GM12878 (cell line): ENCODE measurements at regions of chr14 and their contacts with region 1.

Region 1: DNA sequence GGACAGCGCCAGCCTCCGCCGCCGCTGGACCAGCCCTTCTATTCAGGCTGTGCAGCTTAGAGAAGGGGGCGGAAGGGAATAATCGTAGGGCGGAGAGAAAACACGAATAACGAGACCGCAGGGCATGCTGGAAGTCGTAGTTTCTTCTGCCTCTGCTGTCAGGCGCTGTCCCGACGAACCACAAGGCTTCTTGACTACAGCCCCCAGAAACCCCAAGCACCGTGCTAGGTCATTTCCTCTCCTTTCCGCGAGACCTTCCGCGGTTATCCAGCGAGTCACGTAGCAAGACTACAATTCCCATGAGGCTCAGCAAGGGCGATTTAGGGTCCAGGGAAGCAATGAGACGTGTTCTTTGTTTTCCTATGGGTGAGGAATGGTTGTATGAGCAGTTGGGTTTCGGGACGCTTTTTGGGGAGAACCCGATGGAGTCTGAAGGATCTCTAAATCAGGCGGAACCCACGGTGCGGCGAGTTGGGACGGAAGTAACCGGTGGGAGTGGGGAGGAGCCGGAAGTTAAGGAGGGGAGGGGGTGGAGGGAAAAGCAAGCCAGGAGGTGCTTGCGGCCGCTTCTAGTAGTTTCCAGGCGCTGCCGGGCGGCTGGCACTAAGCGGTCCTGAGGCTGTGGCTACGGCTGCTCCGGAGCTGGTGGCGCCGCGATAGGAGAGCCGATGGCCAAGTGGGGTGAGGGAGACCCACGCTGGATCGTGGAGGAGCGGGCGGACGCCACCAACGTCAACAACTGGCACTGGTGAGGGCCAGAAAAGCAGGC is at the starts of genes AHSA1 and VIPAS39:
- DNase-seq: peak; percentile 99
- ATAC-seq: peak; percentile 95
- H3K4me3 ChIP-seq: peak within 1 kb of the TSS; percentile 88
- H3K27ac ChIP-seq: peak within 1 kb of the TSS; percentile 97
- H3K4me1 ChIP-seq: peaks cover 13% of the 10 kb centered on the region
- H3K27me3 ChIP-seq: no peaks in the 10 kb centered on the region
- CTCF ChIP-seq: no peak
- EP300 ChIP-seq: no peak
- POLR2A ChIP-seq: peak; percentile 93
- RAD21 ChIP-seq: no peak
- polyA plus RNA-seq, gene AHSA1: 51.8 to 98.3 TPM
- polyA plus RNA-seq, gene VIPAS39: 6.7 to 10.5 TPM

Region 2: DNA sequence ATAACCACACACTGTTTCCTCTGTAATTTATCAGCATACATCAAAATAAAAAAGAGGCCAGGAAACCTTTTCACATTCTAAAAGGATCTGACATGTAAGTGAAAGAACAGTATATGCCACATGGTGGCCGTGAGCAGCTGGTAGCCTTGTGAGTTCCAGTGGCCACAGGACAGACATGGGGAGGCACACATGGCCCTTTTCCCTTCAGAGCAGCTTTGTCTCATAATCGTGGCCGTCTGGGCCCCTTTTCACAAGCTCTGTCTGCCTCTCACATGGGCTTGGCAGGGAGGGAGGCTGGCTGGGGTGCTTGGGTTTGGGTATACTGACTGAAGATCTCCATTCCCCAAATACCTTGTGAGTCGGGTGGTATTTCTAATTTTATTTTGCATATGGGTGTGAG is 314.6 kb before region 1 on chr14:
- CTCF ChIA-PET with region 1: no interaction called
- POLR2A ChIA-PET with region 1: no interaction called
- RAD21 ChIA-PET with region 1: no interaction called
- SMC1A ChIA-PET with region 1: no interaction called
- in situ Hi-C with region 1: no loop called
- intact Hi-C with region 1: no loop called
- DNase-seq: no peak
- ATAC-seq: no peak
- H3K4me3 ChIP-seq: no peak overlapping the region
- H3K27ac ChIP-seq: no peak overlapping the region
- H3K4me1 ChIP-seq: no peaks in the 10 kb centered on the region
- H3K27me3 ChIP-seq: peaks cover 15 to 18% of the 10 kb centered on the region in 2 experiments
- CTCF ChIP-seq: no peak
- EP300 ChIP-seq: no peak
- POLR2A ChIP-seq: no peak
- RAD21 ChIP-seq: no peak

Region 3: GRCh38 chr14:77320238-77320935 is 137.3 kb before region 1 on chr14 and contains the start of gene POMT2:
- CTCF ChIA-PET with region 1: interaction called, 18 read pairs
- POLR2A ChIA-PET with region 1: interaction called, 6 read pairs
- RAD21 ChIA-PET with region 1: interaction called, 10 read pairs
- SMC1A ChIA-PET with region 1: interaction called, 10 read pairs
- in situ Hi-C with region 1: no loop called
- intact Hi-C with region 1: loop called (anchors 2 kb)
- DNase-seq: peak; percentile 64
- ATAC-seq: peak; percentile 81
- H3K4me3 ChIP-seq: peak within 1 kb of the TSS; percentile 98
- H3K27ac ChIP-seq: peak within 1 kb of the TSS; percentile 98
- H3K4me1 ChIP-seq: peaks cover 4% of the 10 kb centered on the region; the same call in 1 of the 2 replicates
- H3K27me3 ChIP-seq: no peaks in the 10 kb centered on the region
- CTCF ChIP-seq: peak; percentile 14 to 27 (median 26); a peak in 4 of 6 replicates
- EP300 ChIP-seq: no peak
- POLR2A ChIP-seq: no peak
- RAD21 ChIP-seq: no peak
- polyA plus RNA-seq, gene POMT2: 0.23 to 0.99 TPM

Region 4: GRCh38 chr14:77478796-77479195 is 21.1 kb after region 1 on chr14:
- CTCF ChIA-PET with region 1: interaction called, 40 read pairs
- POLR2A ChIA-PET with region 1: no interaction called
- RAD21 ChIA-PET with region 1: interaction called, 12 read pairs
- SMC1A ChIA-PET with region 1: interaction called, 4 read pairs
- in situ Hi-C with region 1: no loop called
- intact Hi-C with region 1: no loop called
- DNase-seq: peak; percentile 30
- ATAC-seq: peak; percentile 99
- H3K4me3 ChIP-seq: no peak overlapping the region
- H3K27ac ChIP-seq: no peak overlapping the region
- H3K4me1 ChIP-seq: peaks cover 8% of the 10 kb centered on the region
- H3K27me3 ChIP-seq: no peaks in the 10 kb centered on the region; a peak in 1 of 4 replicates
- CTCF ChIP-seq: no peak
- EP300 ChIP-seq: peak in 1 of 2 experiments; percentile 54; a peak in 1 of 4 replicates
- POLR2A ChIP-seq: no peak
- RAD21 ChIP-seq: no peak

Region 5: DNA sequence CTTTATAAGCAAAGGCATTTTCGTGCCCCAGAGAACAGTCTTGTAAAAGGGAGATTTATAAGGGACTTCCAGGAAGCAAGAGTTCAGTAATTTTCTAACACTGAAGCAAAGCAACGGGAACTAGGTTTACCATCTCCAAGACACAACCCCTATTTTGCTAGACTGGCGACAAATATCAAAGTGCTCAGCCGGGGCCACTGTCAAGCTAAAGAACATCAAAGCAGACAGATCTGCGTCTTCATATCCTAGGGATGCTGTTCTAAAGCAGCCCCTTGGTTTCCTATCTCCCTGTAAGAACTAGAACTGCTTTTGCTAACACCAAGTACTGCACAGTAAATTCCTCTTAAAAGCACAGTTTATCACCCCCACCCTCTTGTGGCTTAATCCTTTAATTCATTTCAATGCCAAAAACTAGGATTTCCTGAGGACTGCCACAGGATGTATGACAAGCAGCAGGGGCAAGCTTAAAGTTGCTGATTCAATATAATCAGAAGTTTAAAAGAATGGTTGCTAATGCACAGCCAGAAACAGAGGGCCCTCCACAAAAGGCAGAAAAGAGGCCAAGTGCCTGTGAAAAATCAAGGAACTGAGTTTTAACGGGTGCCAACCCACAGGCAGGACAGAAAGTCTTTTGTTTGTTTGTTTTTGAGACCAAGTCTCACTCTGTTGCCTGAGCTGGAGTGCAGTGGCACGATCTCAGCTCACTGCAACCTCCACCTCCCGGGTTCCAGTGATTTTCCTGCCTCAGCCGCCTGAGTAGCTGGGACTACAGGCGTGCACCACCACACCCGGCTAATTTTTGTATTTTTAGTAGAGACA is 84.9 kb after region 1 on chr14:
- CTCF ChIA-PET with region 1: interaction called, 22 read pairs
- POLR2A ChIA-PET with region 1: no interaction called
- RAD21 ChIA-PET with region 1: interaction called, 11 read pairs
- SMC1A ChIA-PET with region 1: interaction called, 9 read pairs
- in situ Hi-C with region 1: loop called (anchors 5 kb)
- intact Hi-C with region 1: no loop called
- DNase-seq: no peak
- ATAC-seq: peak; percentile 66
- H3K4me3 ChIP-seq: peak overlapping the region; percentile 10; the same call in 1 of the 2 replicates
- H3K27ac ChIP-seq: peak overlapping the region; percentile 73
- H3K4me1 ChIP-seq: peaks cover 19% of the 10 kb centered on the region
- H3K27me3 ChIP-seq: no peaks in the 10 kb centered on the region
- CTCF ChIP-seq: no peak
- EP300 ChIP-seq: no peak
- POLR2A ChIP-seq: no peak
- RAD21 ChIP-seq: no peak

Region 6: GRCh38 chr14:77607741-77608302 is 150.1 kb after region 1 on chr14:
- CTCF ChIA-PET with region 1: interaction called, 6 read pairs
- POLR2A ChIA-PET with region 1: interaction called, 3 read pairs
- RAD21 ChIA-PET with region 1: interaction called, 6 read pairs
- SMC1A ChIA-PET with region 1: interaction called, 11 read pairs
- in situ Hi-C with region 1: no loop called
- intact Hi-C with region 1: no loop called
- DNase-seq: no peak
- ATAC-seq: peak; percentile 77
- H3K4me3 ChIP-seq: 0 out of 2 replicates have a peak overlapping the region, but pooled peaks have one; percentile 31
- H3K27ac ChIP-seq: peak overlapping the region; percentile 68
- H3K4me1 ChIP-seq: peaks cover 18% of the 10 kb centered on the region
- H3K27me3 ChIP-seq: no peaks in the 10 kb centered on the region
- CTCF ChIP-seq: no peak
- EP300 ChIP-seq: no peak
- POLR2A ChIP-seq: no peak
- RAD21 ChIP-seq: no peak

Region 7: DNA sequence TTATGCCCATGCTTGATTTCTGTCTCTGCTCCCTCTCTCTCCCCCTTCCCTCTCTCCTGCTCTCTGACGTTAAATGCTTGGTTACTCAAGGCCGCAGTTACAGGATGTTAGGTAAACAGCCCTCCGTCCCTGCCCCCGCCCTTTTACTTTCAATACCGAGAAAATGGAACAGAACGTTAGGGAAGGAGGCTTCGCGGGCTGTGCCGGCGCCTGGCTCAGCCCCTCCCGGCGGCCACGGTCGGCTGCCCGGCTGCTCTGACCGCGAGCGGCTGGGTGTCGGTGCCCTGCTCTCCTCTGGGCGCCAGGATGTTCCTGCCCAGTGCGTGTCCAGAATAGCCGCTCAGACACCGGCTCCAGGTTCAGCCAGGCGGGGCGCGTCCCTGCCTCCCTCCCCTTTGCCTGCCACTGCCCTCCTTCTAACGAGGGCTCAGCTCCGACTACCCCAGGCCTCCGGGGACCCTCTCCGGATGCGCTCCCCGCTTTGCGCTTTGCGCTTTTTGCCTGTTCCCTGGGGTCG is 508.3 kb after region 1 on chr14:
- CTCF ChIA-PET with region 1: no interaction called
- POLR2A ChIA-PET with region 1: no interaction called
- RAD21 ChIA-PET with region 1: no interaction called
- SMC1A ChIA-PET with region 1: no interaction called
- in situ Hi-C with region 1: no loop called
- intact Hi-C with region 1: no loop called
- DNase-seq: peak; percentile 8
- ATAC-seq: peak; percentile 95
- H3K4me3 ChIP-seq: peak overlapping the region; percentile 60; the same call in 1 of the 2 replicates
- H3K27ac ChIP-seq: no peak overlapping the region
- H3K4me1 ChIP-seq: 0 out of 2 replicates have a peak, but pooled peaks cover 6% of the 10 kb centered on the region
- H3K27me3 ChIP-seq: no peaks in the 10 kb centered on the region; a peak in 1 of 4 replicates
- CTCF ChIP-seq: no peak
- EP300 ChIP-seq: no peak
- POLR2A ChIP-seq: no peak
- RAD21 ChIP-seq: no peak